H1 (cell line): ENCODE measurements at regions of chr11 and their contacts with region 1.

Region 1: GRCh38 chr11:67640021-67640757 is 626 bp upstream of the TBX10 start:
- DNase-seq: peak in 1 of 2 experiments; percentile 89
- H3K4me3 ChIP-seq: no peak overlapping the region
- H3K27ac ChIP-seq: no peak overlapping the region
- H3K4me1 ChIP-seq: peaks cover 0 to 2% (median under 1%) of the 10 kb centered on the region in 4 experiments; a peak in 1 of 7 replicates
- H3K27me3 ChIP-seq: peaks cover 8 to 28% (median 15%) of the 10 kb centered on the region in 4 experiments
- CTCF ChIP-seq: peak in 2 of 3 experiments; percentile 85 to 93; a peak in 3 of 4 replicates
- EP300 ChIP-seq: no peak
- POLR2A ChIP-seq: no peak
- RAD21 ChIP-seq: peak; percentile 70 to 73

Region 2: GRCh38 chr11:67545280-67545679 is 94.9 kb before region 1 on chr11:
- CTCF ChIA-PET with region 1: no interaction called
- POLR2A ChIA-PET with region 1: no interaction called
- DNase-seq: no peak
- H3K4me3 ChIP-seq: no peak overlapping the region
- H3K27ac ChIP-seq: no peak overlapping the region
- H3K4me1 ChIP-seq: peaks cover 0 to 5% (median 0%) of the 10 kb centered on the region in 4 experiments; a peak in 2 of 7 replicates
- H3K27me3 ChIP-seq: no peaks in the 10 kb centered on the region; a peak in 1 of 7 replicates
- CTCF ChIP-seq: peak in 2 of 3 experiments; percentile 29 to 44; a peak in 2 of 4 replicates
- EP300 ChIP-seq: no peak
- POLR2A ChIP-seq: no peak
- RAD21 ChIP-seq: no peak

Region 3: GRCh38 chr11:67698247-67698646 is 58.1 kb after region 1 on chr11:
- CTCF ChIA-PET with region 1: interaction called, 38 read pairs
- POLR2A ChIA-PET with region 1: no interaction called
- DNase-seq: peak in 1 of 2 experiments; percentile 44
- H3K4me3 ChIP-seq: no peak overlapping the region
- H3K27ac ChIP-seq: no peak overlapping the region
- H3K4me1 ChIP-seq: no peaks in the 10 kb centered on the region
- H3K27me3 ChIP-seq: no peaks in the 10 kb centered on the region; a peak in 2 of 7 replicates
- CTCF ChIP-seq: peak; percentile 62 to 87 (median 72)
- EP300 ChIP-seq: no peak
- POLR2A ChIP-seq: no peak
- RAD21 ChIP-seq: peak; percentile 35 to 53; a peak in 2 of 4 replicates